CD8-positive, alpha-beta T cell (primary cell): ENCODE measurements at regions of chr17 and their contacts with region 1.

Region 1: GRCh38 chr17:15112846-15113617 is 152.1 kb downstream of the PMP22 start:
- DNase-seq: no peak
- ATAC-seq: no peak
- H3K4me3 ChIP-seq: no peak overlapping the region
- H3K4me3 Mint-ChIP-seq: no peak overlapping the region
- H3K27ac ChIP-seq: no peak overlapping the region
- H3K27ac Mint-ChIP-seq: no peak overlapping the region
- H3K4me1 ChIP-seq: no peaks in the 10 kb centered on the region
- H3K4me1 Mint-ChIP-seq: no peaks in the 10 kb centered on the region
- H3K27me3 ChIP-seq: no peaks in the 10 kb centered on the region
- H3K27me3 Mint-ChIP-seq: no peaks in the 10 kb centered on the region
- CTCF ChIP-seq: no peak

Region 2: GRCh38 chr17:15123593-15124263 is 10.7 kb after region 1 on chr17:
- CTCF ChIA-PET with region 1: no interaction called
- POLR2A ChIA-PET with region 1: no interaction called
- intact Hi-C with region 1: loop called in 1 of 2 experiments (anchors 1 kb)
- DNase-seq: no peak
- ATAC-seq: no peak
- H3K4me3 ChIP-seq: no peak overlapping the region
- H3K4me3 Mint-ChIP-seq: no peak overlapping the region
- H3K27ac ChIP-seq: no peak overlapping the region
- H3K27ac Mint-ChIP-seq: no peak overlapping the region
- H3K4me1 ChIP-seq: no peaks in the 10 kb centered on the region
- H3K4me1 Mint-ChIP-seq: no peaks in the 10 kb centered on the region
- H3K27me3 ChIP-seq: no peaks in the 10 kb centered on the region
- H3K27me3 Mint-ChIP-seq: peaks cover 16% of the 10 kb centered on the region
- CTCF ChIP-seq: no peak